ENCODE measurements at regions of chr2 and their contacts with region 1.

Region 1: DNA sequence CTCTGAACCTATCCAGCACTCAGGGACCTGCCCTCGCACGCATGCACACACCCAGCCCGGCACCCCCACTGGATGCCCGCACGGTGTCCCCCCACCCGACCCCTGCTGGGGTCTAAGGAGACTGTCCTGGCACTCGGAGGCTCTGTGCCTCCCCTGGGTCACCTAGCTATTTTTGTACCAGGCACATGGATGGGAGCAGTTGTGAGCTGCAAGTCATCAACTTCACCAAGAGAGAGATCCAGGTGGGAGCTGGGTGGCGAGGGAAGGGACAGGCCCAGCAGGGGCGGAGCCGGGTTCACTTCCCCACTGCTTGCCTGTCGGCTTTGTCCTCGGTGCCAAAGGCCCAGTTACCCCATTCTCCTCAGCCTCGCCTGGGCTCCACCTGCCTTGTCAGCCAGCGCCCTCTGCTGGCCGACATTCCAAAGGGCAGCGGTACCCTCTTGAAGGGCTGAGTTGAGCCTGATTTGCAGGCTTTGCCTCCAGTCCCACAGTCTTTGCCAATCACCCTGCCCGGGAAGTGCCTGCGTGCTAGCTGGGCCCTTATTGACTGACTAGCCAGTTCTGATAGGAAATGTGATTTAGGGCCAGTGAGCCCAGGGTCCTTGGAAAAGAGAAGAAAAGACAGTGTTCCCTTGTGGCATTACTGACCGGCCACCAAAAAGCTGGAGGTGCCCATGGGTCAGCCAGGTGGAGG is 5.8 kb downstream of the NT5DC4 start:
- DNase-seq: peak; percentile 79 to 93 (median 88)
- H3K4me3 ChIP-seq: no peak overlapping the region
- H3K27ac ChIP-seq: peak overlapping the region in 2 of 59 donors; percentile 25 to 46
- H3K27me3 ChIP-seq: no peaks in the 10 kb centered on the region
- CTCF ChIP-seq: peak; percentile 81 to 99 (median 97)

Region 2: GRCh38 chr2:112597537-112598322 is 128.9 kb before region 1 on chr2:
- intact Hi-C with region 1: loop called (anchors 2 kb)
- DNase-seq: no peak
- H3K4me3 ChIP-seq: no peak overlapping the region
- H3K27ac ChIP-seq: no peak overlapping the region
- H3K27me3 ChIP-seq: no peaks in the 10 kb centered on the region
- CTCF ChIP-seq: no peak

Region 3: GRCh38 chr2:112606488-112606902 is 120.1 kb before region 1 on chr2:
- intact Hi-C with region 1: loop called in 1 of 2 experiments (anchors 2 kb)
- DNase-seq: no peak
- H3K4me3 ChIP-seq: no peak overlapping the region
- H3K27ac ChIP-seq: no peak overlapping the region
- H3K27me3 ChIP-seq: no peaks in the 10 kb centered on the region
- CTCF ChIP-seq: no peak

Region 4: DNA sequence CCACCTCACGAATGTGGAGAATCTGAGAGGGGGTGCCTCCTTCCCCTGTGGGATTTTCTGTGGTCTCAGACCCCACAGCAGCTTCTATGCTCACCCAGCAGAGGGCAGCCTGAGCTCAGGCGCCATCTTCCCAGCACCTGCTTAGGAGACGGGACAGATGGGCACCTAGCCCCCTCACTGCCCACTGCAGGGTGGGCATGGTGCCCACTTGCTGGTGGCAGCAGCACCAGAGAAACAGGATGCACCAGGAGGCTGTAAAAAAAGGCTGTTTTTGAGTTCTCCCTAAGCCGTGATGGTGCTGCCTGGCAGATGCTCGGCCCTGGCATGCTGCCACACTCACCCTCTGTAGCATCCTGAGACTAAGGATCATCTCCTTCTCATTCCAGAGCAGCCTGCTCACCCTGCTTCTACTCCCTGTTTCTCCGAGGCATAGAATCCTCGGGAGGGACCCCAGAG is 100.0 kb before region 1 on chr2:
- intact Hi-C with region 1: loop called (anchors 1 to 2 kb)
- DNase-seq: peak; percentile 72 to 88 (median 81)
- H3K4me3 ChIP-seq: peak overlapping the region; percentile 14 to 69 (median 52)
- H3K27ac ChIP-seq: peak overlapping the region in 56 of 59 donors; percentile 6 to 92 (median 73)
- H3K27me3 ChIP-seq: no peaks in the 10 kb centered on the region
- CTCF ChIP-seq: peak; percentile 74 to 98 (median 92)

Region 5: GRCh38 chr2:112821142-112821541 is 94.5 kb after region 1 on chr2:
- intact Hi-C with region 1: no loop called
- DNase-seq: no peak
- H3K4me3 ChIP-seq: no peak overlapping the region
- H3K27ac ChIP-seq: no peak overlapping the region
- H3K27me3 ChIP-seq: no peaks in the 10 kb centered on the region
- CTCF ChIP-seq: no peak